ENCODE measurements at regions of chr7 and their contacts with region 1.

Region 1: GRCh38 chr7:12067141-12067831 is 143.8 kb upstream of the TMEM106B start:
- DNase-seq: peak; percentile 31 to 60 (median 36)
- ATAC-seq: peak; percentile 96
- H3K4me3 ChIP-seq: no peak overlapping the region
- H3K27ac ChIP-seq: no peak overlapping the region
- H3K4me1 ChIP-seq: no peaks in the 10 kb centered on the region
- H3K27me3 ChIP-seq: no peaks in the 10 kb centered on the region; a peak in 1 of 5 replicates
- CTCF ChIP-seq: peak; percentile 57 to 82 (median 62)
- EP300 ChIP-seq: no peak
- POLR2A ChIP-seq: no peak
- RAD21 ChIP-seq: peak; percentile 84 to 87

Region 2: GRCh38 chr7:11427686-11428273 is 639.5 kb before region 1 on chr7:
- CTCF ChIA-PET with region 1: no interaction called
- POLR2A ChIA-PET with region 1: no interaction called
- in situ Hi-C with region 1: no loop called
- intact Hi-C with region 1: loop called (anchors 10 kb)
- DNase-seq: peak; percentile 23 to 65 (median 40)
- ATAC-seq: peak; percentile 70
- H3K4me3 ChIP-seq: no peak overlapping the region
- H3K27ac ChIP-seq: no peak overlapping the region
- H3K4me1 ChIP-seq: no peaks in the 10 kb centered on the region
- H3K27me3 ChIP-seq: no peaks in the 10 kb centered on the region
- CTCF ChIP-seq: peak; percentile 20 to 67 (median 46); a peak in 4 of 6 replicates
- EP300 ChIP-seq: no peak
- POLR2A ChIP-seq: no peak
- RAD21 ChIP-seq: peak; percentile 69 to 80

Region 3: GRCh38 chr7:12244129-12244528 is 176.8 kb after region 1 on chr7:
- CTCF ChIA-PET with region 1: no interaction called
- POLR2A ChIA-PET with region 1: no interaction called
- in situ Hi-C with region 1: no loop called
- intact Hi-C with region 1: loop called (anchors 1 kb)
- DNase-seq: peak in 3 of 4 experiments; percentile 10 to 57 (median 37)
- ATAC-seq: peak; percentile 98
- H3K4me3 ChIP-seq: no peak overlapping the region
- H3K27ac ChIP-seq: no peak overlapping the region
- H3K4me1 ChIP-seq: no peaks in the 10 kb centered on the region
- H3K27me3 ChIP-seq: no peaks in the 10 kb centered on the region
- CTCF ChIP-seq: peak; percentile 49 to 59 (median 58)
- EP300 ChIP-seq: no peak
- POLR2A ChIP-seq: no peak
- RAD21 ChIP-seq: peak in 1 of 2 experiments; percentile 53; a peak in 2 of 4 replicates

Region 4: DNA sequence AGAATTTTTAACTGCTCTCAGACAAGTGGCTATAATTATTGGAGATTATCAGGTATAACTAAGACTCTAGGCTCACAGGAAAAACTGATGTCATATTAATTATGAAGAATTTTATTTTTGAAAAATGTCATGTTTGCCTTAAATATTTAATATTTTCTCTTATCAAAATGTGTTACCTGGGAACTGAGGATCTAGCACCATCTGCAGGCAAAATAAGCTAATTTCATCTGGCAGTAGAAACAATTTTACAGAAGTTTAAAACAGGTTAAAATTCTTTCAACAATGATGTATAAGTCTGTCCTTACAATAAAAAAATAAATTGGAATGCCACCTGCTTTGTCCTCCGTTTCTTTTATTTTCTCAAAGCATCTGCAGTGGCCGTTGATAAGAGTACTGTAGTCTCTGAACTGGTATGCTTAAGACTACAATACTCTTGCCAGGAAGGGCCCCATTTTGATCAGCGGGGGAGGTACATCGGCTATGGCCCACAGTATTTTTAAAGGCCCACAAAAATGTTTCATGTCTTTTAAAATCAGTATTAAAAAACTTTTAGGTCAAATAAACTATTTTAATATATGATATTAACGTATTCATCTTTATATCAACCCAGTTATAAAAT is 255.1 kb after region 1 on chr7:
- CTCF ChIA-PET with region 1: interaction called, 27 read pairs
- POLR2A ChIA-PET with region 1: no interaction called
- in situ Hi-C with region 1: no loop called
- intact Hi-C with region 1: loop called (anchors 1 kb)
- DNase-seq: peak in 2 of 4 experiments; percentile 12 to 22
- ATAC-seq: peak; percentile 56
- H3K4me3 ChIP-seq: no peak overlapping the region
- H3K27ac ChIP-seq: no peak overlapping the region
- H3K4me1 ChIP-seq: peaks cover 0 to 5% of the 10 kb centered on the region in 2 experiments; a peak in 1 of 5 replicates
- H3K27me3 ChIP-seq: no peaks in the 10 kb centered on the region
- CTCF ChIP-seq: peak; percentile 32 to 61 (median 34); a peak in 4 of 6 replicates
- EP300 ChIP-seq: no peak
- POLR2A ChIP-seq: no peak
- RAD21 ChIP-seq: peak; percentile 65 to 75

Region 5: DNA sequence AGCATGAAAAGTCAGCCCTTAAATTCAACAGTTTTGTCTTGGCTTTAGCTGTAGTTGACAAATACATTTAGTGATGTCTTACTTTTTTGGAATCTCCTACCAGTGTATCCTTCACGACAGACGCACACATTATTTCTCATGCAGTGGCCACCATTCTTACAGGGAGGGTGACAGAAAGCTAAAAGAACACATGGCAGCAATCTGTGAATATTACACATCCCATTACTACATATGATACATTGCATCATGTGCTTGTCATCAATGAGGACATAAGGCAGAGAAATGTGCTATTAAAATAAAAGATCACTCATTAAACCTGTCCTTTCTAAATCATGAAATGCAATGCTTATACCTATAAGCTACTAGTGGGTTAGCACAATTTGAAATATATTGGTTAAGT is 269.8 kb after region 1 on chr7:
- CTCF ChIA-PET with region 1: no interaction called
- POLR2A ChIA-PET with region 1: no interaction called
- in situ Hi-C with region 1: no loop called
- intact Hi-C with region 1: no loop called
- DNase-seq: no peak
- ATAC-seq: peak; percentile 22; the same call in 1 of the 3 replicates
- H3K4me3 ChIP-seq: no peak overlapping the region
- H3K27ac ChIP-seq: no peak overlapping the region
- H3K4me1 ChIP-seq: no peaks in the 10 kb centered on the region
- H3K27me3 ChIP-seq: no peaks in the 10 kb centered on the region
- CTCF ChIP-seq: no peak
- EP300 ChIP-seq: no peak
- POLR2A ChIP-seq: no peak
- RAD21 ChIP-seq: no peak

Region 6: GRCh38 chr7:12458520-12459131 is 391.3 kb after region 1 on chr7:
- CTCF ChIA-PET with region 1: no interaction called
- POLR2A ChIA-PET with region 1: no interaction called
- in situ Hi-C with region 1: no loop called
- intact Hi-C with region 1: loop called (anchors 5 kb)
- DNase-seq: peak; percentile 40 to 71 (median 56)
- ATAC-seq: peak; percentile 99
- H3K4me3 ChIP-seq: no peak overlapping the region
- H3K27ac ChIP-seq: no peak overlapping the region
- H3K4me1 ChIP-seq: no peaks in the 10 kb centered on the region
- H3K27me3 ChIP-seq: no peaks in the 10 kb centered on the region
- CTCF ChIP-seq: peak; percentile 74 to 89 (median 78)
- EP300 ChIP-seq: no peak
- POLR2A ChIP-seq: no peak
- RAD21 ChIP-seq: peak; percentile 79 to 93

Region 7: DNA sequence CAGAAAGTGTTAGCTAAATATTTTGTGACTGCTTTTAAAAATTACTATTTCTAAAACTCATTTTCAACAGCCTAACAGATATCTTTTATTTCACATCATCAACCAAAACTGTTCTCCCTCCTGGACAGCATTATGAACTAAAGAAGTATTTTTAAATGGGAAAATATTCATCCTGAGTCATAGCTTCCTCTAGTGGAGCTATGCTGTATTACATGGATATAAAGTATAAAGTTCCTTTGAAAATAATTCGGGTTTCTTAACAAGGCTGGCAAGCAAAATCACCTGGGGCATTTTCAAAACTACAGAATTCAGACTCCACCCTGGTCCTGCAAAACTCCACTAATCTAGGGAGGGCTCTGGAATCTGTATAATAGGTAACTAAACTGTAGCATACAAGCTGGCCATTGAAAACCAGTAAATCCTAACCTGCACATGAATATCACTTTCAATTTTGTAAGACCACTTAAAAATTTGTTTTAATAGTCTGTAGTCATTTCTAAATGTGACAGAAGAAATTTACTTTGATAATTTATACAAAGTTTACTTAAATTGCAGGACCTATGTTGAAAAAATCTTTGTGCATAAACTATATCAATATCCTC is 556.7 kb after region 1 on chr7:
- CTCF ChIA-PET with region 1: no interaction called
- POLR2A ChIA-PET with region 1: no interaction called
- in situ Hi-C with region 1: loop called (anchors 25 kb)
- intact Hi-C with region 1: loop called (anchors 5 kb)
- DNase-seq: peak; percentile 19 to 49 (median 24)
- ATAC-seq: peak; percentile 78
- H3K4me3 ChIP-seq: no peak overlapping the region
- H3K27ac ChIP-seq: no peak overlapping the region; the same call in 2 of the 3 replicates
- H3K4me1 ChIP-seq: peaks cover 0 to 10% of the 10 kb centered on the region in 2 experiments; a peak in 2 of 5 replicates
- H3K27me3 ChIP-seq: no peaks in the 10 kb centered on the region
- CTCF ChIP-seq: peak; percentile 57 to 88 (median 74); a peak in 5 of 6 replicates
- EP300 ChIP-seq: no peak
- POLR2A ChIP-seq: no peak
- RAD21 ChIP-seq: peak; percentile 88 to 92

Region 8: GRCh38 chr7:13496976-13497375 is 1429.7 kb after region 1 on chr7:
- CTCF ChIA-PET with region 1: no interaction called
- POLR2A ChIA-PET with region 1: no interaction called
- in situ Hi-C with region 1: no loop called
- intact Hi-C with region 1: no loop called
- DNase-seq: no peak
- ATAC-seq: no peak
- H3K4me3 ChIP-seq: no peak overlapping the region
- H3K27ac ChIP-seq: no peak overlapping the region
- H3K4me1 ChIP-seq: no peaks in the 10 kb centered on the region
- H3K27me3 ChIP-seq: no peaks in the 10 kb centered on the region
- CTCF ChIP-seq: no peak
- EP300 ChIP-seq: no peak
- POLR2A ChIP-seq: no peak
- RAD21 ChIP-seq: no peak